ENCODE measurements at regions of chr4 and their contacts with region 1.

Region 1: DNA sequence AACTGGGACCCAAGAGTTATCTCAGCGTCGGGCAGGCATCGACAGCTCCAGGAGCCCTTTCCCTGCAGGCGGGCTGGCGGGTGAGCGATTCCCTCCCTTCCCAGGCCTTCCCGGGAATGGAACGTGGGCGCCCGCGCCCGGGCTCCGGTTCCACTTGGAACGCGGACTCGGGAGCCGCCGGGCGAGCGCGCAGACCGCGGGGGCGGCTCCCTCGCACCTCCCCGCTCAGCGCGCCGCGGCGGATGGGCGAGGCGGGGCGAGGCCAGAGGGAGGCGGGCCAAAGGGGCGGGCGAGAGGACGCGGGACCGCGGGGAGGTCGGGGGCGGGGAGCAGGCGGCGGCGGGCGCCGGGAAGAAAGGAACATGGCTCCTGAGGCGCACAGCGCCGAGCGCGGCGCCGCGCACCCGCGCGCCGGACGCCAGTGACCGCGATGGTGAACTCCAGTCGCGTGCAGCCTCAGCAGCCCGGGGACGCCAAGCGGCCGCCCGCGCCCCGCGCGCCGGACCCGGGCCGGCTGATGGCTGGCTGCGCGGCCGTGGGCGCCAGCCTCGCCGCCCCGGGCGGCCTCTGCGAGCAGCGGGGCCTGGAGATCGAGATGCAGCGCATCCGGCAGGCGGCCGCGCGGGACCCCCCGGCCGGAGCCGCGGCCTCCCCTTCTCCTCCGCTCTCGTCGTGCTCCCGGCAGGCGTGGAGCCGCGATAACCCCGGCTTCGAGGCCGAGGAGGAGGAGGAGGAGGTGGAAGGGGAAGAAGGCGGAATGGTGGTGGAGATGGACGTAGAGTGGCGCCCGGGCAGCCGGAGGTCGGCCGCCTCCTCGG is at the start of gene PKD2:
- DNase-seq: peak; percentile 76 to 93 (median 84)
- H3K4me3 ChIP-seq: peak within 1 kb of the TSS; percentile 64 to 94 (median 84)
- H3K27ac ChIP-seq: peak within 1 kb of the TSS; percentile 64 to 97 (median 91)
- H3K27me3 ChIP-seq: no peaks in the 10 kb centered on the region
- CTCF ChIP-seq: peak in 11 of 56 donors; percentile 9 to 30 (median 16)
- total RNA-seq, gene PKD2: 29.7 to 60.9 (median 40.7) TPM

Region 2: GRCh38 chr4:87973283-87974169 is 34.0 kb before region 1 on chr4:
- intact Hi-C with region 1: loop called in 1 of 2 experiments (anchors 1 kb)
- DNase-seq: peak in 8 of 10 donors; percentile 31 to 73 (median 60)
- H3K4me3 ChIP-seq: peak overlapping the region in 55 of 59 donors; percentile 3 to 67 (median 44)
- H3K27ac ChIP-seq: peak overlapping the region in 45 of 59 donors; percentile 2 to 97 (median 88)
- H3K27me3 ChIP-seq: no peaks in the 10 kb centered on the region
- CTCF ChIP-seq: peak; percentile 85 to 99 (median 92)

Region 3: DNA sequence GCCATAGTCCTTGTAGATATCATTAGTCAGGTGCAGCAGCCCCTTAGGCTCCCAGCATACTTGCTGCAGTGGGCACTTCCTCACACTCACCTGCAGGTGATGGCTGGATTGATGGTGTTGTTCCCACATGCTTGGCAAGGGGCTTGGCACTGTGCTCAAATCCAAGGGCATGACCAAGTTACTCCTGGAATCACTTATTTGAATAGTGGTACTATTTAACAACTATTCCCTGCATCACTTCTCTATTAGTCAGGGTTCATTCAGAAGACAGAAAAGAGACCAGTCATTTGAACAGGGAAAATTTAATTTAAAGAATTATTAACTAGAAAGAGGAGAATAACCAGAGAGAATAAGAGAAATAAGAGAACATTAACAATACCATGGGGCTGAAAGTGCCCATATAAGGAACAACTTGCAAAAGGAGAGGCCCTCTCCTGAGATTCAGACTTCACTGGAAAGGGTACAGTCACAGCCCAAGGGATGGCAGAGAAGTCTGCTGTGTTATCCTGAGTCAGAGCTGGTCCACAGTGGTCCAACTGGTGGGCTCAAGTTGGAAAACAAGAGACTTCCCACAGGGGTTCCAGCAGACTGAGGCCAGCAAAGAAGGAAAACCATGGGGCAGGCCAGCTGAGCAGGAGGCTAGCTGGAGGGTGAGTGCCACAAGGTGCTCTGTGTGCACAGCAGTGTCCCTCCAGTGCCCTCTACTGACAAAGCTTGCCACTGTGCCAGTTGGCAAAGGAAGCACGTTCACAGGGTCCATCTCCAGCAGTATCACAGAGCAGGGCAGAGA is 22.2 kb before region 1 on chr4:
- intact Hi-C with region 1: loop called in 1 of 2 experiments (anchors 2 kb)
- DNase-seq: peak; percentile 63 to 88 (median 81)
- H3K4me3 ChIP-seq: no peak overlapping the region
- H3K27ac ChIP-seq: peak overlapping the region in 46 of 59 donors; percentile 0 to 80 (median 40)
- H3K27me3 ChIP-seq: no peaks in the 10 kb centered on the region
- CTCF ChIP-seq: peak in 55 of 56 donors; percentile 40 to 83 (median 66)

Measured in dorsolateral prefrontal cortex (tissue), 120 donors.